Mammary epithelial cell (primary cell): ENCODE measurements at regions of chr9 and their contacts with region 1.

Region 1: DNA sequence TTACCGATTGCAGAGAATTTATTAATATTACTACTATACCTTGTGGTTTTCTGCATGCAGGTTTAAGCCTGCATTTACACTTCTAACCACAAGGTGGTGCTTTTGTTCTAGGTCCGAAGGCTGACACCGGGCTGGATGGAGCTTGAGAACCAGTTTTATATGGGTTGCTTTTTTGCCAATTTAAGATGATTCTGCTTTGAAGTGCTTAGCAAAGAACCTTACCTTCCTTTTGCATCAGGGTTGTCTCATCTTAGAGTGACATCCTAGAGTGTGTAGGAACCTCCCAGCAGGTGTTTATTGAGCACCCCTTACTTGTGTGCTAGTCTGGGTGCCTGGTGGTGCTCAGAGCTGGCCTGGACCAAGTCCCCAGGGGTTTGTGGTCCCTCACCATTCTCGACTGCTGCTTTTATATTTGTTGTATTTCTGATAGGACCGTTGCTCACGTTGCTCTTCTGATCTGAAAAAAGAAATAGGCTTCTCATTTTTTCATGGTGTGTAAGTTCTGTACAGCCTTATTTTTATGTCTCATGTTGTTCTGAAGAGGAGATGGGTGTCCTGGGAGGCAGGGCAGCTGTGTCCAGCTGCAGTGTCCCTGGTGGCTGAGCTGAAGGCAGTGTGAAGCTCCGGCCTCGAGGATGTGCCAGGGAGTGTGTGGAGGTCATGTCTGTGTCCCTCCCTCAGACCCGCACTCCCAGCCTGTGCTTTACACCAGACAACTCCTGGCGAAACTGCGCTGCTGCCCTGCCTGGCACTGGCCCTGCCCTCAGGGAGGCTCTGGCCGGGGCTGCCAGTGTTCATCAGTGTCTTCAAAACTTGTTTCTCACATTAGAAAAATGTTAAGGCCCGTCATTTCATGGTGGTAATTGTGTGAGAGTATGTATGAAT is 54.3 kb downstream of the EHMT1 start:
- DNase-seq: peak; percentile 48
- H3K4me3 ChIP-seq: no peak overlapping the region
- H3K27ac ChIP-seq: no peak overlapping the region
- H3K4me1 ChIP-seq: peaks cover 8% of the 10 kb centered on the region
- H3K27me3 ChIP-seq: no peaks in the 10 kb centered on the region
- CTCF ChIP-seq: peak; percentile 87 to 89

Region 2: DNA sequence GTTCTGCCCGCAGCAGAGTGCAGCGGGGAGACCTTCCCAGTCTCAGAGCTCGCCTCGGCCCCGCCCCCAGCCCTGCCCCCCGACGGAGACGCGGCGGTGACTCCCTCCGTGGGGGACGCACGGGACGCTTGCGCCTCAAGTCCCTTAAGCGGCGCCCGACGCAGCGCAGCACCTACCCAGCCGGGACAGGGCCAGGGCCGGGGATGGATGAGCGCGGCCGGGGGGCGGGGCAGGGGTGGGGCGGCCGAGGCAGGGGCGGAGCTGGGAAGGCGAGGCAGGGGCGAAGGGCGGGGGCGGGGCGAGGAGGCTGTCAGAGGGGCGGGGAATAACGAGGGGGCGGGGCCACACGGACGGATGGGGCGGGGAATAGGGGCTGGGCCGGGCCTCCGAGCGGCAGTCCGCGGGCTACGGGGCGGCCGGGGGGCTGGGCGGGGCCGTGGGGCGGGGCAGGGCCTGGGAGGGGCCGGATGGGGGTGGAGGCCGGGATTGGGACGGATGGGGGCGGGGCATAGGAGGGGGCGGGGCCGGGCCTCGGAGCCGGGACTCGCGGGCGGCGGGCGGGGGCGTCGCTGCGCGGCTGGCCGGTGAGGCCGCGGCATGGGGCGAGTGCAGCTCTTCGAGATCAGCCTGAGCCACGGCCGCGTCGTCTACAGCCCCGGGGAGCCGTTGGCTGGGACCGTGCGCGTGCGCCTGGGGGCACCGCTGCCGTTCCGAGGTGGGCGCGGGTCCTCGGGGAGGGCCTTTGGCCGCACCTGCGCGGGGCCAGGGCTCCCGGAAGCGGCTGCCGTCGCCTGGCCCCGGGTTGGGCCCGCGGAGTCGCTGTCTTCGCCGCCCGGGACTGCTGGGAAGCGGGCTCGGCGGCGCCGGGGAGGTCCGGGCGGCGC is 67.8 kb before region 1 on chr9 and contains the start of gene ARRDC1:
- CTCF ChIA-PET with region 1: no interaction called
- dilution Hi-C with region 1: no loop called
- in situ Hi-C with region 1: no loop called
- intact Hi-C with region 1: no loop called
- DNase-seq: peak; percentile 81
- H3K4me3 ChIP-seq: peak within 1 kb of the TSS; percentile 56 to 81 (median 71)
- H3K27ac ChIP-seq: peak within 1 kb of the TSS; percentile 53
- H3K4me1 ChIP-seq: peaks cover 23% of the 10 kb centered on the region
- H3K27me3 ChIP-seq: no peaks in the 10 kb centered on the region
- CTCF ChIP-seq: no peak
- total RNA-seq, gene ARRDC1: 35.0 to 153 TPM

Region 3: DNA sequence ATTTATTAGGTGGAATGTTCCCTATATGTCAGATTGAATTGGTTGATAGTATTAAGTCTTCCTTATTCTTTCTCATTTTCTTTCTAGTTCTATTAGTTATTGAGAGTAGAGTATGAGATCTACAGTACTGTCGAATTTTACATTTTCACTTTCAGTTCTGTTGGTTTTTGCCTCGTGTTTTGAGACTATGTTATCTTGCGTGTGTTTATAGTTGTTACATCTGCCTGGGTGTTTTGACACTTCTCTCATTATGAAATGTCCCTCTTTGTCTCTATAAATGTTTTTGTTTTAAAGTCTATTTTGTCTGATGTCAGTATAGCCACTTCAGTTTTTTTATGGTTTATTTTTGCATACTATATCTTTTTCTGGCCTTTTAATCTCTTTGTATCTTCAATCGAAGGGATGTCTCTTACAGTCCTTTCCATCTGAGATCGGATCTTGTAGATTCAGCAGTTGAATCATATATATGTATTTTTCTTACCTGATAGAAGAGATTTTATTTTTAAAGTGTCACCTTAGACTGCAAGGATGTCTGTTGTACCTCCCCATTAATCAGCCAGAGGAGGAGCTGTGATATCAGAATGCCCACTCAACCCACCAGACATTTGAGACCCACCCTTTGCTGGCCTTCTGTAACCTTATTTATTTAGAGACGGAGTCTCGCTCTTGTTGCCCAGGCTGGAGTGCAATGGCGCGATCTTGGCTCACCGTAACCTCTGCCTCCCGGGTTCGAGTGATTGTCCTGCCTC is 33.7 kb before region 1 on chr9:
- CTCF ChIA-PET with region 1: no interaction called
- dilution Hi-C with region 1: loop called (anchors 5 kb)
- in situ Hi-C with region 1: no loop called
- intact Hi-C with region 1: no loop called
- DNase-seq: no peak
- H3K4me3 ChIP-seq: no peak overlapping the region
- H3K27ac ChIP-seq: no peak overlapping the region
- H3K4me1 ChIP-seq: no peaks in the 10 kb centered on the region
- H3K27me3 ChIP-seq: no peaks in the 10 kb centered on the region
- CTCF ChIP-seq: no peak

Region 4: GRCh38 chr9:137740312-137740711 is 67.2 kb after region 1 on chr9:
- CTCF ChIA-PET with region 1: no interaction called
- dilution Hi-C with region 1: no loop called
- in situ Hi-C with region 1: no loop called
- intact Hi-C with region 1: no loop called
- DNase-seq: no peak
- H3K4me3 ChIP-seq: no peak overlapping the region
- H3K27ac ChIP-seq: no peak overlapping the region
- H3K4me1 ChIP-seq: peaks cover 5% of the 10 kb centered on the region
- H3K27me3 ChIP-seq: no peaks in the 10 kb centered on the region
- CTCF ChIP-seq: no peak

Region 5: DNA sequence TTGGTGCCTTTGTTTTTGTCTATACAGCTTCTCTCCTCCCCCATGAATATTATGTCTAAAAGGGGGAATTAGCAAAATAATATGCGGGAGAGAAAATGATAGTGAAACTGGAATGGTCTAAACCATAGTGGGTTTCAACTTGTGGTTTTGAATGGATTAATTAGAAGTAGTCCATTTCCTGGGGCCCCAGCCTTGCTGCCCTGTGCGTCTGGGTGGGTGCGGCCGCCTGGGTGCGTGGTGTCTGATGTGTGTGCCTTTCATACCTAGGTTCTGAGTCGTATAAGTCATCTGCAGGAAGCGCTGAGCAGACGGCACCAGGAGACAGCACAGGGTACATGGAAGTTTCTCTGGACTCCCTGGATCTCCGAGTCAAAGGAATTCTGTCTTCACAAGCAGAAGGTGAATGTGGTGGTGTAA is 84.5 kb after region 1 on chr9:
- CTCF ChIA-PET with region 1: no interaction called
- dilution Hi-C with region 1: no loop called
- in situ Hi-C with region 1: no loop called
- intact Hi-C with region 1: loop called (anchors 5 kb)
- DNase-seq: peak; percentile 77
- H3K4me3 ChIP-seq: no peak overlapping the region
- H3K27ac ChIP-seq: peak overlapping the region; percentile 46
- H3K4me1 ChIP-seq: peaks cover 14% of the 10 kb centered on the region
- H3K27me3 ChIP-seq: no peaks in the 10 kb centered on the region
- CTCF ChIP-seq: no peak

Region 6: GRCh38 chr9:137772281-137772873 is 99.2 kb after region 1 on chr9:
- CTCF ChIA-PET with region 1: no interaction called
- dilution Hi-C with region 1: no loop called
- in situ Hi-C with region 1: no loop called
- intact Hi-C with region 1: loop called (anchors 1 kb)
- DNase-seq: no peak
- H3K4me3 ChIP-seq: no peak overlapping the region
- H3K27ac ChIP-seq: no peak overlapping the region
- H3K4me1 ChIP-seq: no peaks in the 10 kb centered on the region
- H3K27me3 ChIP-seq: no peaks in the 10 kb centered on the region
- CTCF ChIP-seq: peak in 1 of 2 donors; percentile 25

Region 7: DNA sequence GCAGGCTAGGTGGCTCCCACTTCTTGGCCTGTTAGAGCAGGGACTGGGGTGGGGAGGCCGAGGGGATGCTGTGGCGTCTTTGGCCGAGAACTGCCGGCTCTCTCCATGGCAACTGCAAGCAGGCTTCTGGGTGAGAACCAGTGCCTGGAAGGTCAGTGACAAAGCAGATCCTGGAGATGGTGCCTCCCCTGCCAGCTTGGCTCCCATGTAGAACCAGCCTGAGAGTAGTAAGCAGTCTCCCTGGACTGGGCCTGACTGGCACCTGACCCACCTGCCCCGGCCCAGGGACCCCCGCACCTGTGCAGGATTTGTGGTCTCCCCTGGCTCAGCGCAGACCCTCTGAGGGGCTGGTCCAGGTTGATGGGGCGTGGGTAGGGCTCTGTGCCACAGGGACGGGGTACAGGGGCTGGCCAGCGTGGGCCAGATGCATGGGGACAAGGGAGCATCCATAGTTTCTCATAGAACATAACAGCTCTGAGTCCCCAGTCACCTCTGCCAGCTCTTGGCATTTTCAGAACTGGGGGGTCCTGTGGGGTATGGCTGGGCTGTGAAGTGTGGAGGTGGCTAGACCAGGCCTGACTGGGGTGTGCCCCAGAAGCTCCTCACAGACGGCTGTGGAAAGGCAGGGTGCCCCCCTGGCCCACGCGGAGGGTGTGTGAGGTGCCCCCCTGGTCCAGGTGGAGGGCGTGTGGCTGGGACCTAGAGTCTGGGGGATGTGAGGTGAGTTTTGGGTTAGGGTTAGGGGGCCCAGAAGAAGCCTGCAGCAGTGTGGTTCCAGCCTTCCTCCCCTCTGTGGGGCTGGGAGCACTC is 226.6 kb after region 1 on chr9:
- CTCF ChIA-PET with region 1: no interaction called
- dilution Hi-C with region 1: no loop called
- in situ Hi-C with region 1: no loop called
- intact Hi-C with region 1: no loop called
- DNase-seq: no peak
- H3K4me3 ChIP-seq: no peak overlapping the region
- H3K27ac ChIP-seq: no peak overlapping the region
- H3K4me1 ChIP-seq: no peaks in the 10 kb centered on the region
- H3K27me3 ChIP-seq: no peaks in the 10 kb centered on the region
- CTCF ChIP-seq: no peak

Region 8: DNA sequence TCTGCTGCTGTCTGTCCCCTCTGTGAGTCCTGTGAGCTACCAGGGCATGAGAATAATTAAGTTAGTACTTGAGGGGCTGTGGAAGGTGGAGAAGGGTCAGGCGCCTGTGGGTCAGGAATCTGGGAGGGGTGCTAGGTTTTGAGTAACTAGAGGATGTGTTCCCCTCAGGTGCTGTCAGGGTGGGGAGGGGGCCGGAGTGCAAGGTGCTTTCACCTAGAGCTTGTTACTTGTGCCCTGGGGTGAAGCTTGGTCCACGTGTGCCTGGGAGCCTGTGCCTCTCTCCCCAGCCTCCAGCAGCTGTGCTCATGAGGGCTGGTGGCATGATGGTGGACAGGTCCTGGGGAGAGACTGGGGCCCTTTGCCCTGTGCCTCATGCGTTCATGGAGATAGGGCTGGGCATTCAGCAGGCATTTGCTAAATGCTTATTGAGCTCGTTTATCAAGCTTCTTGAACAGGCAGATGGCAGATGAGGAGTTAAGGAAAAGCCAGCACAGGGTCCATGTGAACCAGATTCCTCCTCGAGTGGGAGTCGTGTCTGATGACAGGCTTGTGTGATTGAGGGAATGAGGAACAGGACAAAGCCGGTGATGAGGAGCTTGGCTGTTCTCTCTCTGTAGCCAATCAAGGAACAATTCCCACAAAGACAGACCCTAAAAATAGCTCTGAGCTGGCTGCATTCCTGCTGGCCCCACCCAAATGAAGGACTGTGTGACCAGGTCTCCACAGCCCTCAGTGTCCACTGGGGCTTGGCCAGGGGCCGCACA is 245.4 kb after region 1 on chr9:
- CTCF ChIA-PET with region 1: no interaction called
- dilution Hi-C with region 1: no loop called
- in situ Hi-C with region 1: no loop called
- intact Hi-C with region 1: no loop called
- DNase-seq: no peak
- H3K4me3 ChIP-seq: no peak overlapping the region
- H3K27ac ChIP-seq: no peak overlapping the region
- H3K4me1 ChIP-seq: no peaks in the 10 kb centered on the region
- H3K27me3 ChIP-seq: no peaks in the 10 kb centered on the region
- CTCF ChIP-seq: no peak

Region 9: GRCh38 chr9:138022121-138022741 is 349.1 kb after region 1 on chr9:
- CTCF ChIA-PET with region 1: no interaction called
- dilution Hi-C with region 1: no loop called
- in situ Hi-C with region 1: no loop called
- intact Hi-C with region 1: loop called (anchors 5 kb)
- DNase-seq: peak; percentile 15
- H3K4me3 ChIP-seq: no peak overlapping the region
- H3K27ac ChIP-seq: no peak overlapping the region
- H3K4me1 ChIP-seq: no peaks in the 10 kb centered on the region
- H3K27me3 ChIP-seq: peaks cover 18% of the 10 kb centered on the region
- CTCF ChIP-seq: peak; percentile 27 to 42